Caco-2 (cell line): ENCODE measurements at regions of chr12 and their contacts with region 1.

Region 1: GRCh38 chr12:6533923-6534694 is at the start of gene GAPDH:
- DNase-seq: peak; percentile 98 to 99
- H3K4me3 ChIP-seq: peak within 1 kb of the TSS; percentile 93
- H3K4me3 Mint-ChIP-seq: peak within 1 kb of the TSS; percentile 91
- H3K27ac Mint-ChIP-seq: peak within 1 kb of the TSS; percentile 97
- H3K4me1 ChIP-seq: peaks cover 36% of the 10 kb centered on the region
- H3K4me1 Mint-ChIP-seq: peaks cover 46% of the 10 kb centered on the region
- H3K27me3 ChIP-seq: no peaks in the 10 kb centered on the region
- H3K27me3 Mint-ChIP-seq: no peaks in the 10 kb centered on the region
- CTCF ChIP-seq: no peak
- total RNA-seq, gene GAPDH: 4,975 and 5,337 TPM in 2 replicates

Region 2: DNA sequence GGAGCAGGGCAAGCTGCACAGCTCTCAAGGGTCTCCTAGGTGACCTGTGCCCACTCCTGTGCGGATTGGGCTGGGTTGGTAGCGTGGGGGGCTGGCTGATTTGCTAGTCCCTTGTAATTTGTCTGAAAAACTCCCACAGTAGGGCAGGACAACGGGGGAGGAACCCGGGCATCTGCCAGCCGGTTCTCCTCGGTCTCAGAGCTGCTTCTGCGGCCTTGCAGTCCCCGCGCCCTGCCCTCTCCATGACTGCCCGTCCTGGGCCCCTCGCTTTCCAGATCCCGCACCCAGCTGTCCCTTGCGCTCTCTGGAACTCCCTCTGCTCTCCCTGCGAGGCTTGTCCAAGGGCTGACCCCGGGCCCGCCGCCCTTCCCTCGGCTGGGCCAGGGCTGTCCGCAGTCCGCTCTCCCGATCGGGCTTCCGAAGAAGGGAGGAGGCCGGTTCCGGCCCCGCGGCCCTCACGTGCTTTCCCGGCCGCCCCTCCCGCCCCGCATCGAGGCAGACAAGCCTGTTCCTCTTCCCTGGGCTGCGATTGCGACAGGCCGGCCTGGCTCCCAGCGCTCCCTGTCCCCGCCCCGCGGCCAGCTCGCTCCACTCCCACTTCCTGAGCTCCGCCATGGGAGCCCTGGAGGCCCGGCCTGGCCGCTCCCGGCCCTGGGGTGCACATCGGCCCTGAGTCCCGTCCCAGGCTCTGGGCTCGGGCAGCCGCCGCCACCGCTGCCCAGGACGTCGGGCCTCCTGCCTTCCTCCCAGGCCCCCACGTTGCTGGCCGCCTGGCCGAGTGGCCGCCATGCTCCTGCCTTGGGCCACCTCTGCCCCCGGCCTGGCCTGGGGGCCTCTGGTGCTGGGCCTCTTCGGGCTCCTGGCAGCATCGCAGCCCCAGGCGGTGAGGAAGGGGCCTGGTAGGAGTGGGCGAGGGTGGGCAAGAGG is 150.3 kb before region 1 on chr12 and contains the start of gene LTBR:
- CTCF ChIA-PET with region 1: interaction called, 3 read pairs
- POLR2A ChIA-PET with region 1: interaction called, 10 read pairs
- intact Hi-C with region 1: no loop called
- DNase-seq: peak; percentile 97 to 99
- H3K4me3 ChIP-seq: peak within 1 kb of the TSS; percentile 92
- H3K4me3 Mint-ChIP-seq: peak within 1 kb of the TSS; percentile 96
- H3K27ac Mint-ChIP-seq: peak within 1 kb of the TSS; percentile 92
- H3K4me1 ChIP-seq: peaks cover 25% of the 10 kb centered on the region
- H3K4me1 Mint-ChIP-seq: peaks cover 15% of the 10 kb centered on the region
- H3K27me3 ChIP-seq: no peaks in the 10 kb centered on the region
- H3K27me3 Mint-ChIP-seq: no peaks in the 10 kb centered on the region
- CTCF ChIP-seq: peak in 1 of 2 experiments; percentile 48
- total RNA-seq, gene LTBR: 194 and 197 TPM in 2 replicates

Region 3: GRCh38 chr12:6407236-6407954 is 126.7 kb before region 1 on chr12:
- CTCF ChIA-PET with region 1: no interaction called
- POLR2A ChIA-PET with region 1: no interaction called
- intact Hi-C with region 1: no loop called
- DNase-seq: no peak
- H3K4me3 ChIP-seq: no peak overlapping the region
- H3K4me3 Mint-ChIP-seq: no peak overlapping the region
- H3K27ac Mint-ChIP-seq: no peak overlapping the region
- H3K4me1 ChIP-seq: 0 out of 2 replicates have a peak, but pooled peaks cover 4% of the 10 kb centered on the region
- H3K4me1 Mint-ChIP-seq: peaks cover 7% of the 10 kb centered on the region
- H3K27me3 ChIP-seq: no peaks in the 10 kb centered on the region
- H3K27me3 Mint-ChIP-seq: no peaks in the 10 kb centered on the region
- CTCF ChIP-seq: no peak

Region 4: DNA sequence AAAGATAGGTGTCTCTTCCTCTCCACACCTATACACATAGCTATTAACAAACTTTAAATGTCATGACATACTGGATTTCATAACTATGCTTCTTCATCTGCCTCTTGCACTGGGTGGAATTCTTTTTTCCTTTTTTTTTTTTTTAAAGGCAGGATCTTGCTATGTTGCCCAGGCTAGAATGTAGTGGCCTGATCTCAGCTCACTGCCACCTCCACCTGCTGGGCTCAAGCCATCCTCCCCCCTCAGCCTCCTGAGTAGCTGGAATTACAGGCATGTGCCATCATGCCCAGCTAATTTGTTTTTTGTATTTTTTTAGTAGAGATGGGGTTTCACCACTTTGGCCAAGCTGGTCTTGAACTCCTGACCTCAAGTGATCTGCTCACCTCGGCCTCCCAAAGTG is 45.9 kb before region 1 on chr12:
- CTCF ChIA-PET with region 1: interaction called, 13 read pairs
- POLR2A ChIA-PET with region 1: interaction called, 44 read pairs
- intact Hi-C with region 1: no loop called
- DNase-seq: no peak
- H3K4me3 ChIP-seq: no peak overlapping the region
- H3K4me3 Mint-ChIP-seq: no peak overlapping the region
- H3K27ac Mint-ChIP-seq: no peak overlapping the region
- H3K4me1 ChIP-seq: no peaks in the 10 kb centered on the region
- H3K4me1 Mint-ChIP-seq: no peaks in the 10 kb centered on the region
- H3K27me3 ChIP-seq: no peaks in the 10 kb centered on the region
- H3K27me3 Mint-ChIP-seq: no peaks in the 10 kb centered on the region
- CTCF ChIP-seq: no peak

Region 5: GRCh38 chr12:6563448-6564050 is 29.4 kb after region 1 on chr12:
- CTCF ChIA-PET with region 1: interaction called, 7 read pairs
- POLR2A ChIA-PET with region 1: interaction called, 68 read pairs
- intact Hi-C with region 1: loop called (anchors 1 kb)
- DNase-seq: peak; percentile 63 to 80
- H3K4me3 ChIP-seq: no peak overlapping the region
- H3K4me3 Mint-ChIP-seq: no peak overlapping the region
- H3K27ac Mint-ChIP-seq: no peak overlapping the region
- H3K4me1 ChIP-seq: no peaks in the 10 kb centered on the region
- H3K4me1 Mint-ChIP-seq: peaks cover 9% of the 10 kb centered on the region
- H3K27me3 ChIP-seq: no peaks in the 10 kb centered on the region
- H3K27me3 Mint-ChIP-seq: no peaks in the 10 kb centered on the region
- CTCF ChIP-seq: peak; percentile 89 to 96

Region 6: DNA sequence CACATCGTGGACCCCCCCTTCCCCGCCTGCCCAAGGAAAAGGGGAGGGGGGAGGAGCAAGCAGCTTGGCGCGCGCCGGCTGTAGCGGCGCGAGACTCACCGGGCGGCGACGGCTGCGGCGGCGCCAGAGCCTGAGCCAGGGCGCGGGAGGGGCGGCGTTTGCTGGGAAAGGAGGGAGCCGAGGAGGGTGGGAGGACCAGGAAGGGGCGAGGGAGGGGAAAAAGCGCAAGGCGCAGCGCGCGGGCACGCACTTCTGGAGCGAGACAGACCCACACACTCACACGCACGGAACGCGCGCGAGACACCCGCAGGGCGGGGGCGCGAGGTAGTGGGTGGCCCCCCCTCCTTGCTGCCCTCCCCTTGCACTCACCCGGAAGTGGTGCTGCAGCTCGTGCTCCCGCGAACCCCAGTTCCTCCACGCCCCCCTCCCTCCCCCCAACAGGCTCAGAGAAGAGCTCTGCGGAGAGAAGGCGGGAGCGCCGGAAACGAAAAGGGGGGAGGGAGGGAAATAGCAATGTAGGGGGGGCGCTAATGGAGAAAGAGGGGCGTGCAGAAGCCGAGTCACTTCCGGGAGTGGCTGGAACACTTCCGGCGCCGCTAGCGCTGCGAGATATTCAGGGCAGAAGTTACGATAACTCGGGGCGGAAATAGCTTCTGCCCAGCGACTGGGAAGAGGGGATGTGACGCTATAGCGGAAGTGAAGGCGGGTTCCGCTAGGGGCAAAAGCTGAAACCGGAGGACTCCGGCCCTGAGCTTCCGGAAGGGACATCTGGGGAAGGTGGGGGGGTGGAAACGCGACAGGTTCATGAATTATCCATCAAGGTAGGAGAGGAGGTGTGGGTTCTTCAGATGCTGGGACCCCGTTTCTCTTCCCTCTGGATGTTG is 155.1 kb after region 1 on chr12 and contains the start of gene ZNF384:
- CTCF ChIA-PET with region 1: interaction called, 17 read pairs
- POLR2A ChIA-PET with region 1: interaction called, 48 read pairs
- intact Hi-C with region 1: no loop called
- DNase-seq: peak; percentile 98 to 100
- H3K4me3 ChIP-seq: peak within 1 kb of the TSS; percentile 96
- H3K4me3 Mint-ChIP-seq: peak within 1 kb of the TSS; percentile 96
- H3K27ac Mint-ChIP-seq: peak within 1 kb of the TSS; percentile 95
- H3K4me1 ChIP-seq: peaks cover 7% of the 10 kb centered on the region; the same call in 1 of the 2 replicates
- H3K4me1 Mint-ChIP-seq: peaks cover 23% of the 10 kb centered on the region
- H3K27me3 ChIP-seq: no peaks in the 10 kb centered on the region
- H3K27me3 Mint-ChIP-seq: peaks cover 9% of the 10 kb centered on the region
- CTCF ChIP-seq: peak in 1 of 2 experiments; percentile 30
- total RNA-seq, gene ZNF384: 119 and 127 TPM in 2 replicates

Region 7: GRCh38 chr12:6851921-6852650 is 318.0 kb after region 1 on chr12 and contains the start of gene USP5:
- CTCF ChIA-PET with region 1: interaction called, 3 read pairs
- POLR2A ChIA-PET with region 1: interaction called, 15 read pairs
- intact Hi-C with region 1: no loop called
- DNase-seq: peak; percentile 100
- H3K4me3 ChIP-seq: peak within 1 kb of the TSS; percentile 69
- H3K4me3 Mint-ChIP-seq: peak within 1 kb of the TSS; percentile 94
- H3K27ac Mint-ChIP-seq: peak within 1 kb of the TSS; percentile 95
- H3K4me1 ChIP-seq: peaks cover 13% of the 10 kb centered on the region
- H3K4me1 Mint-ChIP-seq: peaks cover 19% of the 10 kb centered on the region
- H3K27me3 ChIP-seq: no peaks in the 10 kb centered on the region
- H3K27me3 Mint-ChIP-seq: no peaks in the 10 kb centered on the region
- CTCF ChIP-seq: no peak
- total RNA-seq, gene USP5: 226 and 230 TPM in 2 replicates